Sigmoid colon (tissue), 7 donors: ENCODE measurements at regions of chr12 and their contacts with region 1.

Region 1: DNA sequence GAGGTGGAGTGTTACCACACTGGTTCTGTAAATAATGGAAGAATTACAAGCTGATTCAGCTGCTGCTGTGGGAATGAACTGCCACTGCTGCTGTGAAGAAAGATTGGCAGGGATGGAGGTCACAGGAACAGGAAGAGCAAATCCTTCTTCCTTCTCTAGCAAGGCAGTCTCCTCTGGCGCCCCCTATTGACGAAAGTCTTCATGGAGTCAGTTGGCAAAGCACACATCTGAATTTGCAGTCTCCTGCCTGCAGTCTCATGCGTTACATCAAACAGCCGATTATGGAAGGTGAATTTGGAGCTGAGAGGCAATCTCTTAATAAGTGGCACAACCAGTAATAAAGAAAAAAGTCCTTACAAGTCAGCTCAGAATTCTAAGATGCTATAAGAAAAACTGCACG is 106.0 kb upstream of the TMTC1 start:
- DNase-seq: peak; percentile 67
- H3K4me3 ChIP-seq: no peak overlapping the region
- H3K27ac ChIP-seq: no peak overlapping the region
- H3K4me1 ChIP-seq: no peaks in the 10 kb centered on the region
- H3K27me3 ChIP-seq: no peaks in the 10 kb centered on the region
- CTCF ChIP-seq: peak in 3 of 4 experiments; percentile 10 to 48 (median 20)
- EP300 ChIP-seq: no peak
- POLR2A ChIP-seq: no peak

Region 2: DNA sequence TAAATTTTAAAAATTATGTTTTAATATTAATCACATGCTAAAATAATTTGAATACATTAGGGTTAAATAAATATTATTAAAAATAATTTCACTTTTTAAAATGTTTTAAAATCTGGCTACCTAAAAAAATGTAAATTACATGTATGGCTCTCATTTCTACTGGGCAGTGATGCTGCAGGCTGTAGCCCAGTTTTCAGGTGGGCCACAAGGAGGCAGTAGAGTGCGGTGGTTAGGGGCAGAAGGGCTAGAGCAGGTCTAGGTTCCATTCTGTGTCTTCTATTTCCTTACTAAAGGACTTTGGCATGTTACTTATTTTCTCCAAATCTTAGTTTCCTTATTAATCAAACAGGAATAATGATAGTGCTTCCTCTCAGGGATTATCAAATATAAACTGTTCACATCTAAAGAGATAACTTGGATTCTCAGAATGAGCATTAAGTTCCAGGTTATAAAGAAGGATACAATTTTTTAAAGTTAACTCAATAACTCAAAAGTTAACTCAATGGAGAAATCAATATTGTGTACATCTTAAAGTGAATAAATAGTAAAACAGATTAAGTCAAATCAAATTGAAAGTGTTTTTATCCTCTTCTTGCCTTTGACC is 337.3 kb before region 1 on chr12:
- intact Hi-C with region 1: loop called (anchors 10 kb)
- DNase-seq: peak; percentile 74
- H3K4me3 ChIP-seq: no peak overlapping the region
- H3K27ac ChIP-seq: no peak overlapping the region
- H3K4me1 ChIP-seq: peaks cover 0 to 15% (median 0%) of the 10 kb centered on the region in 4 donors
- H3K27me3 ChIP-seq: no peaks in the 10 kb centered on the region
- CTCF ChIP-seq: peak; percentile 53 to 86 (median 76)
- EP300 ChIP-seq: no peak
- POLR2A ChIP-seq: no peak